GM12878 (cell line): ENCODE measurements at regions of chr9 and their contacts with region 1.

Region 1: DNA sequence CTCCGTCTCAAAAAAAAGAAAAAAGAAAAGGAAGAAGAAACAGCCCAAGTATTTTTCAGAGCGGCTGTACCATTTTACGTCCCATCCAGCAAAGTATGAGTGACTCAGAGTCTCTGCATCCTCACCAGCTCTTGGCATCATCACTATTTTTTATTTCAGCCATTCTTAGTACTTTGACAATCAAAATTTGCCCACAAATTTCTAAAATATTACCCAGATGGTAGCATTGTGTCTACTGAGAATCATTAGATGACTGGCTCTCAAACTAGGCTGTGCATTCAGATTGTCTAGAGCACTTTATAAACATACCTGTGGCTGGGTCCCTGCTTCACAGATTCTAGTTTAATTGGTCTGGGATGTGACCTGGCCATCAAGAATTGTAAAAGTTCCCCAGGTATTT is 21.6 kb upstream of the MELK start:
- DNase-seq: no peak
- ATAC-seq: peak; percentile 19
- H3K4me3 ChIP-seq: no peak overlapping the region
- H3K27ac ChIP-seq: peak overlapping the region; percentile 73
- H3K4me1 ChIP-seq: peaks cover 17% of the 10 kb centered on the region
- H3K27me3 ChIP-seq: no peaks in the 10 kb centered on the region
- CTCF ChIP-seq: no peak
- EP300 ChIP-seq: no peak
- POLR2A ChIP-seq: no peak
- RAD21 ChIP-seq: no peak

Region 2: GRCh38 chr9:36461323-36461722 is 89.8 kb before region 1 on chr9:
- CTCF ChIA-PET with region 1: interaction called, 23 read pairs
- POLR2A ChIA-PET with region 1: interaction called, 4 read pairs
- RAD21 ChIA-PET with region 1: interaction called, 6 read pairs
- SMC1A ChIA-PET with region 1: interaction called, 8 read pairs
- in situ Hi-C with region 1: no loop called
- intact Hi-C with region 1: loop called (anchors 2 kb)
- DNase-seq: no peak
- ATAC-seq: no peak
- H3K4me3 ChIP-seq: no peak overlapping the region
- H3K27ac ChIP-seq: no peak overlapping the region
- H3K4me1 ChIP-seq: peaks cover 14% of the 10 kb centered on the region
- H3K27me3 ChIP-seq: no peaks in the 10 kb centered on the region
- CTCF ChIP-seq: no peak
- EP300 ChIP-seq: no peak
- POLR2A ChIP-seq: no peak
- RAD21 ChIP-seq: no peak

Region 3: GRCh38 chr9:36470643-36471290 is 80.4 kb before region 1 on chr9:
- CTCF ChIA-PET with region 1: interaction called, 5 read pairs
- POLR2A ChIA-PET with region 1: interaction called, 3 read pairs
- RAD21 ChIA-PET with region 1: interaction called, 4 read pairs
- SMC1A ChIA-PET with region 1: interaction called, 17 read pairs
- in situ Hi-C with region 1: no loop called
- intact Hi-C with region 1: no loop called
- DNase-seq: peak; percentile 67
- ATAC-seq: peak; percentile 98
- H3K4me3 ChIP-seq: peak overlapping the region; percentile 66
- H3K27ac ChIP-seq: peak overlapping the region; percentile 91
- H3K4me1 ChIP-seq: peaks cover 15% of the 10 kb centered on the region
- H3K27me3 ChIP-seq: no peaks in the 10 kb centered on the region
- CTCF ChIP-seq: no peak
- EP300 ChIP-seq: 0 out of 4 replicates have a peak, but pooled peaks of 1 of the 2 experiments have one; percentile 11
- POLR2A ChIP-seq: peak; percentile 53
- RAD21 ChIP-seq: no peak

Region 4: DNA sequence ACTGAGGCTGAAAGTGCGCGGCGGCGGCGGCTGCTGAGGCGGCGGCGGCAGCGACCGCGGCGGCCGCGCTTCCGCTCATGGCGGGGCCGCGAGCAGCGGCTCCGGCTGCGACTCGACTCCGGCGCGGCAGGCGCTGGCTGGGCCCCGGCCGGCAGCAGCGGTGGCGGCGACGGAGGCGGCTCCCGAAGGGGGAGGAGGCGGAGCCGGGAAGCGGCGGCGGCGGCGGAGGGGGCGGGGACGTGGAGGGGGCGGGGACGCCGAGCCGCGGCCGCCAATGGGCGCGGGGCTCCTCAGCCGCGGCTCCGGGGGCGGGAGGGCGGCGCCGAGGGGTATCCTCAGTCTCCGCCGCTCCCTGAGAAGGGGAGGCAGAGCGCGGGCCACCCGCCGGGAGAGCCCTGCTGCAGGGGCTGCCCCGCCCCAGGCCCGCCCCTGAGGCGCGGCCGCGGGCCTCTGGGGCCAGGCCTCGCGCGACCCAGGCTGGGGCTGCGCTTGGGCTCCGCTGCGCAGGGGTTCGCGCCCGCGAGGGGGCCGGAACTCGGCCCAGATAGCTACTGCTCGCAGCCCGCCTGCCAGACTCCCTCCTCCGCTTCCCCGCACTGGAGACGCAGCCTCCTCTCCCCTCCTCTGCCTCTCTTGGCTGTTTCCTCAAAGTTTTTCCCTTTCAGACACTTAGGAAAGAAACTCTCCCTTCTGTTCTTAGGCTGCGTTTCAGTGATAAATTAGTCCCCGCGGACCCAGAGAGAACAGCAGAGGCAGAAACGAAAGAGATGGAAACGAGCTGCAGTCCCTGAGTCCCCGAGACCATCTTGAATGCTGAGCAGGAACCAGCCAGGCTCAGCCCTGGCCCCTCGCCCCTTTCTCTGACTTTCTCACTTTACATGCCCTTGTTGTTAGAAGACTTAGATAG is 63.4 kb before region 1 on chr9:
- CTCF ChIA-PET with region 1: interaction called, 9 read pairs
- POLR2A ChIA-PET with region 1: interaction called, 15 read pairs
- RAD21 ChIA-PET with region 1: interaction called, 32 read pairs
- SMC1A ChIA-PET with region 1: interaction called, 13 read pairs
- in situ Hi-C with region 1: loop called (anchors 5 kb)
- intact Hi-C with region 1: loop called (anchors 1 kb)
- DNase-seq: peak; percentile 62
- ATAC-seq: peak; percentile 95
- H3K4me3 ChIP-seq: peak overlapping the region; percentile 76
- H3K27ac ChIP-seq: peak overlapping the region; percentile 99
- H3K4me1 ChIP-seq: peaks cover 11% of the 10 kb centered on the region
- H3K27me3 ChIP-seq: no peaks in the 10 kb centered on the region
- CTCF ChIP-seq: no peak
- EP300 ChIP-seq: no peak
- POLR2A ChIP-seq: peak; percentile 91
- RAD21 ChIP-seq: no peak